ENCODE measurements at regions of chr16 and their contacts with region 1.

Region 1: DNA sequence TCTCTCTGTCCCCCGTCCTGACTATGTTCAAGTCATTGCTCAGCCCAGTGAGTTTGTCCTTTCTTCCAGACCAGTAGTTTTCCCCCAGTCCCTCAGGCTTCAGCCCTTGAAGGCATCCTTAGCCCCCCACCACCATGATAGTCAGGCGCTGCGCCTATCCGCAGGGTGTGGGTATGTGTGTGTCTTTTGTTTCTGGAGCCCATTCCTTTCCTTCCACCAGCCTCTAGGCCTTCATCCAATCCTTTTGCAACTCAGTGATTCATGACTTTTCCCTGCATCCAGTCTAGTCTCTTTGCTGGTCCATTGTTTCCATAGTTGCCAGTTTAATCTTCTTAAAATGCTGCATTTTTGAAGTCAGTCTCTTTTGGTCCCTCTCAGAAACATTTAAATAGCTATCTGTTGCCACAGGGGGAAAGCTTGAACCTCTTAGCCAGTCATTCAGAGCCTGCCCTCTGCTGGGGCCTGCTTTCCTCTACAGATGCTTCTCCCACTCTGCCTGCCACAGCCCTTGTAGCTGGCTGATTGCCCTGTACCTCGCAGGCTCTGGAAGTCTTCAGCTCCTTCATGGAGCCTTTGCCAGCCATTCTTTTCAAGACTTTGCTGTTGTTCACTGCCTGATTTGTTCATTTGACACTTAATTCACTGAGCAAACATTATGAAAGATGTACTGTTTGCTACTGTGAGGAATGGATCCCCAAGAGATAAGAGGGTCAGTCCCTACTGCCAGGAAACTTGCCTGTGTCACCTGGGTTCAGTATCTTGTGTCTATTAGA is 55.9 kb upstream of the ADCY7 start:
- DNase-seq: peak; percentile 80
- H3K4me3 Mint-ChIP-seq: no peak overlapping the region
- H3K27ac Mint-ChIP-seq: peak overlapping the region; percentile 46
- H3K4me1 Mint-ChIP-seq: peaks cover 17% of the 10 kb centered on the region
- H3K27me3 Mint-ChIP-seq: no peaks in the 10 kb centered on the region

Region 2: DNA sequence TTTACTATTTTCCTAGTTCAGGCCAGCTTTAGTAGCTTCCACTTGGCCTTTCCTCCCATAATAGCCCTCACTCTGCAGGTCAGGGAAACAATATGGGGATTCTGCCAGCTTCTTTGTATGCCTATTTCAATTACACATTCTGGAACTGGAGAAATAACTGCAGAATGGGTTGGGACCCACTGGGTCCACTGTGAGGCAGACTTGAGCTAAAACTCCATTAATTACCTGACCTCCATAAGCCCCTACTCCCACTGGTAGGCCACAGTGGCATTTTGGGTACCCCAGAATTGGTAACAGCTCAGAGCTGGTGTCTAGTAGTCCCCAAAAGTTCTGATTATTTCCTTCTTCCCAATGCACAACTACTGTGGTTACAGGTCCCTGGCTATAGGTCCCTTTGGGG is 74.1 kb before region 1 on chr16:
- CTCF ChIA-PET with region 1: interaction called, 13 read pairs
- POLR2A ChIA-PET with region 1: no interaction called
- intact Hi-C with region 1: no loop called
- DNase-seq: no peak
- H3K4me3 Mint-ChIP-seq: no peak overlapping the region
- H3K27ac Mint-ChIP-seq: no peak overlapping the region
- H3K4me1 Mint-ChIP-seq: no peaks in the 10 kb centered on the region
- H3K27me3 Mint-ChIP-seq: peaks cover 2% of the 10 kb centered on the region

Region 3: GRCh38 chr16:50166511-50167500 is 43.6 kb before region 1 on chr16:
- CTCF ChIA-PET with region 1: interaction called, 11 read pairs
- POLR2A ChIA-PET with region 1: interaction called, 3 read pairs
- intact Hi-C with region 1: no loop called
- DNase-seq: peak; percentile 50
- H3K4me3 Mint-ChIP-seq: no peak overlapping the region
- H3K27ac Mint-ChIP-seq: peak overlapping the region; percentile 80
- H3K4me1 Mint-ChIP-seq: peaks cover 55% of the 10 kb centered on the region
- H3K27me3 Mint-ChIP-seq: no peaks in the 10 kb centered on the region

Region 4: GRCh38 chr16:50326949-50327402 is 116.5 kb after region 1 on chr16:
- CTCF ChIA-PET with region 1: interaction called, 11 read pairs
- POLR2A ChIA-PET with region 1: no interaction called
- intact Hi-C with region 1: loop called (anchors 2 kb)
- DNase-seq: peak; percentile 81
- H3K4me3 Mint-ChIP-seq: no peak overlapping the region
- H3K27ac Mint-ChIP-seq: peak overlapping the region; percentile 45
- H3K4me1 Mint-ChIP-seq: peaks cover 59% of the 10 kb centered on the region
- H3K27me3 Mint-ChIP-seq: no peaks in the 10 kb centered on the region

Region 5: GRCh38 chr16:50509521-50510341 is 299.3 kb after region 1 on chr16:
- CTCF ChIA-PET with region 1: no interaction called
- POLR2A ChIA-PET with region 1: no interaction called
- intact Hi-C with region 1: loop called (anchors 1 kb)
- DNase-seq: peak; percentile 66
- H3K4me3 Mint-ChIP-seq: no peak overlapping the region
- H3K27ac Mint-ChIP-seq: no peak overlapping the region
- H3K4me1 Mint-ChIP-seq: no peaks in the 10 kb centered on the region
- H3K27me3 Mint-ChIP-seq: no peaks in the 10 kb centered on the region

Measured in activated CD4-positive, alpha-beta memory T cell treated with anti-CD3 and anti-CD28 coated beads for 36 hours (primary cell).